IMR-90 (cell line): ENCODE measurements at regions of chr14 and their contacts with region 1.

Region 1: GRCh38 chr14:32469388-32470160 is 140.5 kb downstream of the AKAP6 start:
- DNase-seq: peak; percentile 76
- ATAC-seq: peak; percentile 55
- H3K4me3 ChIP-seq: no peak overlapping the region
- H3K27ac ChIP-seq: peak overlapping the region; percentile 12; the same call in 1 of the 2 replicates
- H3K4me1 ChIP-seq: peaks cover 20% of the 10 kb centered on the region
- H3K27me3 ChIP-seq: no peaks in the 10 kb centered on the region
- CTCF ChIP-seq: peak; percentile 72
- POLR2A ChIP-seq: no peak
- RAD21 ChIP-seq: peak; percentile 78

Region 2: DNA sequence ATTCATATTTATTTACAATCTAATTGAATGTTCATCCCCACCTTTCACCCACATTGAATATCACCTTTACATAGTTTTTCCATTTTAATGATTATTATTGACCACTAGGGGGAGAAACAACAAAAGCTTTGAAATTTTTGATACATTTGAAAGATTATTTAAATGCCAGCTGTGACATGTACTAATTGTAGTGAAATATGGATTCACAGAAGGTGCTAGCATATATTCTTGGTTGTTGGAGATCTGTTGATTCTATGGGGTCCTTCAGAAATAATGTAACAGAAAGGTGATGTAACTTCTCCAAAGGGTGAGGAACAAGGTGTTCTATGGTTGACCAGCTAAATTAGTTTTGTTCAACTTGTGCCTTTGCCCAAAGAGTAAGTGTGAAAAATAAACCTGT is 959.4 kb before region 1 on chr14:
- CTCF ChIA-PET with region 1: no interaction called
- POLR2A ChIA-PET with region 1: no interaction called
- dilution Hi-C with region 1: no loop called
- in situ Hi-C with region 1: loop called (anchors 25 kb)
- intact Hi-C with region 1: no loop called
- DNase-seq: peak; percentile 10
- ATAC-seq: no peak
- H3K4me3 ChIP-seq: no peak overlapping the region
- H3K27ac ChIP-seq: no peak overlapping the region
- H3K4me1 ChIP-seq: peaks cover 5% of the 10 kb centered on the region
- H3K27me3 ChIP-seq: peaks cover 3% of the 10 kb centered on the region; the same call in 1 of the 2 replicates
- CTCF ChIP-seq: peak; percentile 55
- POLR2A ChIP-seq: no peak
- RAD21 ChIP-seq: peak; percentile 58

Region 3: DNA sequence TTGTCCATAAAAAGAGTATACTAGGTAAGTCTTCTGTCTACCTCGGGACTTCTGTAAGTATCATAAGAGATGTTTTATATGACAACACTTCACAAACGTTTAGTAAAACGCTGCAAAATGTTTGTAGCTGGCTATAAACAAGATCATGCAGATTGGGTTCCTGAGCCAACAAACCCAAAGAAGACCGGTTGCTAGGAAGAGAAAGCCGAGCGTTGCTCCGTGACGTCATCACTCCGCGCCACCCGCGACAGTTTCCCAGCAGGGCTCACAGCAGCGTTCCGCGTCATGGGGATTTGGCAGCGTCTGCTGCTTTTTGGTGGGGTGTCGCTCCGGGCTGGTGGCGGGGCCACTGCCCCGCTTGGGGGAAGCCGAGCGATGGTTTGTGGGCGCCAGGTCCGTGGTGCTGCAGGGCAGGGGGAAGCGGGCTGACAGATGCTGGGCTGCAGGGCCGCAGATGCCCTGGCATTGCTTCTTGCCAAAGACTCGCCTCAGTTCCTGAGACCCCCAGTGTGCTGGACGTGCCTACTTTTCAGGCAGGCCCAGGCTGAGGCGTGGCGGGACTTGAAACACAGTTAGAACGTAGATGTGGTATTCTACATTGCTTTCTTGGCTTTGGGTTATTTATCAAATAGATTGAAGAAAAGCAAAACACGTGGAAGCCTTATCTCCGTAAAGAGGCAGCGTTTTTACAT is 908.3 kb before region 1 on chr14 and contains the start of gene NUBPL:
- CTCF ChIA-PET with region 1: no interaction called
- POLR2A ChIA-PET with region 1: no interaction called
- dilution Hi-C with region 1: no loop called
- in situ Hi-C with region 1: no loop called
- intact Hi-C with region 1: loop called (anchors 10 kb)
- DNase-seq: peak; percentile 93
- ATAC-seq: peak; percentile 95
- H3K4me3 ChIP-seq: peak within 1 kb of the TSS; percentile 92
- H3K27ac ChIP-seq: peak within 1 kb of the TSS; percentile 87
- H3K4me1 ChIP-seq: no peaks in the 10 kb centered on the region; the same call in 1 of the 2 replicates
- H3K27me3 ChIP-seq: no peaks in the 10 kb centered on the region; the same call in 1 of the 2 replicates
- CTCF ChIP-seq: no peak
- POLR2A ChIP-seq: peak; percentile 59; the same call in 1 of the 2 replicates
- RAD21 ChIP-seq: no peak
- total RNA-seq, gene NUBPL: 11.5 and 15.6 TPM in 2 replicates

Region 4: DNA sequence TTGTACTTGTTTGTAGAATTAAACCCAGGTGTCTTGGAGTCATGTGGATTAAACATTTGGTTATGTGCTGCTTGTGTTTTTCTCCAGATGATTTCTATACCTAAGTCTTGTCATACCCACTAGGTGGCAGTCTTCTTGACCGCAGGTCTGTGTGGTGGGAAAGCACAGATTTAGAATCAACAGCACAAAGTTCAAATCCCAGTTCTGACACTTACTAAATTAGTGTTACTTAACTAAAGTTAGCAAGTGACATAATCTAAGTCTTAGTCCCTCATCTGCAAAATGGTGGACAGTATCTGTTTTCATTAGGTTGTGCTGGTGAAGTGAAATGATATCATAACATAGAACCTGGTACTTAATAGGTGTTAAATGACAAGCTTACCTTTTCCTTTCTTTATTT is 543.5 kb before region 1 on chr14:
- CTCF ChIA-PET with region 1: interaction called, 3 read pairs
- POLR2A ChIA-PET with region 1: no interaction called
- dilution Hi-C with region 1: no loop called
- in situ Hi-C with region 1: no loop called
- intact Hi-C with region 1: loop called (anchors 10 kb)
- DNase-seq: peak; percentile 53
- ATAC-seq: no peak
- H3K4me3 ChIP-seq: no peak overlapping the region
- H3K27ac ChIP-seq: no peak overlapping the region
- H3K4me1 ChIP-seq: peaks cover 8% of the 10 kb centered on the region
- H3K27me3 ChIP-seq: no peaks in the 10 kb centered on the region
- CTCF ChIP-seq: peak; percentile 51
- POLR2A ChIP-seq: no peak
- RAD21 ChIP-seq: peak; percentile 44

Region 5: GRCh38 chr14:32202998-32203882 is 266.3 kb before region 1 on chr14 and contains the start of gene RNU6-8:
- CTCF ChIA-PET with region 1: no interaction called
- POLR2A ChIA-PET with region 1: no interaction called
- dilution Hi-C with region 1: no loop called
- in situ Hi-C with region 1: no loop called
- intact Hi-C with region 1: loop called (anchors 5 kb)
- DNase-seq: peak; percentile 79
- ATAC-seq: peak; percentile 91
- H3K4me3 ChIP-seq: peak within 1 kb of the TSS; percentile 67
- H3K27ac ChIP-seq: peak within 1 kb of the TSS; percentile 78
- H3K4me1 ChIP-seq: no peaks in the 10 kb centered on the region
- H3K27me3 ChIP-seq: peaks cover 3% of the 10 kb centered on the region
- CTCF ChIP-seq: no peak
- POLR2A ChIP-seq: no peak
- RAD21 ChIP-seq: no peak
- total RNA-seq, gene RNU6-8: not detected in 2 replicates

Region 6: DNA sequence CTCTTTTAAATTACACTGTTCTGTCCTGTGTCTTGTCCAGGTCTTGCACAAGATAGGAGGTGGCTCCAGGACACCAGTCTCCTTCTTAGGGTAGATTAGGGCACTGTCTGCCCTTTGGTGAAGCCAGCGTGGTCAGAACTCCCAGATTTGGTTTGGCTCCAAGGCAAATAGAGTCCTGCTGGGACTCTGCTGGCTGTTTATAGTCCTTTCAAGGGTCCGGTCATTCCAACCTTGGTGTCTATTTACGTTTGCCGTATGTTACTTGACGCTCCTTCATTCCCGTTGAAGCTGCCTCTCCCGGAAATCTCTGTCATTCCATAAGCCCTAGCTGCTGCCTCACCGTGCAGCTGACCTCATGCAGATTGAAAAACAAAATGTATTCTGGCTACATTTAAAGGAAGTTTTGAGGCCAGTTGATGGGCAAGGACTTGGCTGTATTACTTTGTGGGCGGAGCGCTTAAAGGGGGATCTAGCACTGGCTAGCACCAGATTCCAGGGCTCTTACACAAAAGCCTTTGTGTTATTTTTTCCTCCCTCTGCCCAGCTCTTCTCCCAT is 40.1 kb after region 1 on chr14:
- CTCF ChIA-PET with region 1: interaction called, 9 read pairs
- POLR2A ChIA-PET with region 1: interaction called, 6 read pairs
- dilution Hi-C with region 1: no loop called
- in situ Hi-C with region 1: no loop called
- intact Hi-C with region 1: loop called (anchors 1 kb)
- DNase-seq: peak; percentile 97
- ATAC-seq: peak; percentile 87
- H3K4me3 ChIP-seq: no peak overlapping the region
- H3K27ac ChIP-seq: peak overlapping the region; percentile 83
- H3K4me1 ChIP-seq: peaks cover 17% of the 10 kb centered on the region
- H3K27me3 ChIP-seq: no peaks in the 10 kb centered on the region
- CTCF ChIP-seq: no peak
- POLR2A ChIP-seq: peak; percentile 40; the same call in 1 of the 2 replicates
- RAD21 ChIP-seq: no peak